ENCODE measurements at regions of chr5 and their contacts with region 1.

Region 1: DNA sequence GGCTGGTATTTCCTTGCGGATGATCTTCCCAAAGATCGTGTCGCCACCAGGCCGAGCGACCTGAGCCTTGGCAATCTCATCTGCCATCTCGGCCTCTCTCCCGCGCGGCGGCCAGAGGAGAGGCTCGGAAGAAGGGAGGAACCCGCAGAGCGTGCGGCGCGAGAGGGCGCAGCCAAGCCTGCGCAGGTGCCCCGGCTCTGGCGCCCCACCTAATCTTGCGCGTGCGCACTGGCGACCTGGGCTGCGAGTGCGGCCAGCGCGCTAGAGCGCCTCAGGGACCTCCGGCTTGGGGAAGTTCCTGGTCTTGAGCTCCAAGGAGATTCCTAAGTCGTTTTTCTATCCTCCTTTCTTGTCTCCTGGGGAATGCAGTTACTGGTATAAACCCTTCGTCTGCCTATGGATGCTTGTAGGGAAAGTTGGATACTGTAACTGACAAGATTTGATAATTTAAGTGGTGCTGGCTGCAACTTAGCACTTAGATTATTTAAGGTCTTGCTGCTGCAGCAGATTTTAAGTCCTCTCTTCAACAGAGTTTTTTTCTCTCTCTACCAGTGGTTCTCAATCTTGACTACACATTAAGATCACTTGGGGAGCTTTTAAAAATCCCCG is at the start of gene HINT1:
- DNase-seq: peak; percentile 81 to 96
- H3K4me3 ChIP-seq: peak within 1 kb of the TSS; percentile 93
- H3K27ac ChIP-seq: peak within 1 kb of the TSS; percentile 82
- H3K4me1 ChIP-seq: peaks cover 23% of the 10 kb centered on the region
- H3K27me3 ChIP-seq: no peaks in the 10 kb centered on the region
- CTCF ChIP-seq: no peak; the same call in 1 of the 2 replicates
- total RNA-seq, gene HINT1: 210 and 262 TPM in 2 replicates

Region 2: DNA sequence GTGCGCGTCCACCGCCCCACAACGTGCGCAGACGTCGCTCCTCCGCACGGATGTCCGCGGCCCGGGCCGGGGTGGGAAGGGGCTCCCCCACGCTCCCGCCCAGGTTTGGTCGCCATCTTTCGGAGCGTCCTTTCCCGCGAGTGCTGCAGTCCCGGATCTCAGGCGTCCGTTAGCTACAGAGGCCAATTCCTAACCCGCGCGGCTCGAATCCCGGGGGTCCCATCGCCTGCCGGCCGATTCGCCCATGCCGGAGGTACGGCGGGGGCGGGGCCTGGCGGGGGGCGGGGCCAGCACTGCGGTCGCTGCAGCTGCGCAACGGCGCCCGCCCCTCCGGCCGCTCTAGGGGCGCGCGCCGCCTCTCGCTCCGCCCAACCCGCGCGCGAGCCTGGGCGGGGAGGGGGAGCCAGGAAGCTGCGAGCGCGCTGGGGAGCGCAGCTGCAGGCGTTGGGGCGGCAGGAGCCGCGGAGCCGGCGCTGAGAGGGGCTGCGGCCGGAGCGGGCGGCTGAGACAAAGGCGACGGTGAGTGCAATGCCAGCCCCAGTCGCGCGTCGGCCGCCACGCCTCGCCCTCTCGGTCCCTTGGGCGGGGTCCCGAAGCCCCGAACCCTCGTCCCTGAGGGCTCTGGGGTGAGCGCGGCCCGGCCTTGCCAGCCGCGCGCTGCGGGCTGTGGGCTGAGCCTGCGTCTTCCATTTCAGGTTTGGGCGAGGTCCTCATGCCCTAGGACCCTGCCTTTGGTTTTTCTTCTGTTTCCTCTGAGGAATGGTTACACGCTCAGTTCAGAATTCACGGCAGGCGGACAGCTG is 98.6 kb after region 1 on chr5 and contains the start of gene CDC42SE2:
- CTCF ChIA-PET with region 1: no interaction called
- POLR2A ChIA-PET with region 1: no interaction called
- intact Hi-C with region 1: loop called (anchors 2 kb)
- DNase-seq: peak; percentile 59 to 86
- H3K4me3 ChIP-seq: peak within 1 kb of the TSS; percentile 86
- H3K27ac ChIP-seq: peak within 1 kb of the TSS; percentile 61
- H3K4me1 ChIP-seq: peaks cover 31% of the 10 kb centered on the region
- H3K27me3 ChIP-seq: no peaks in the 10 kb centered on the region
- CTCF ChIP-seq: no peak
- total RNA-seq, gene CDC42SE2: 27.3 and 32.8 TPM in 2 replicates

Region 3: GRCh38 chr5:131382407-131383395 is 217.5 kb after region 1 on chr5:
- CTCF ChIA-PET with region 1: interaction called, 6 read pairs
- POLR2A ChIA-PET with region 1: no interaction called
- intact Hi-C with region 1: loop called (anchors 2 kb)
- DNase-seq: peak; percentile 19 to 60
- H3K4me3 ChIP-seq: no peak overlapping the region
- H3K27ac ChIP-seq: no peak overlapping the region
- H3K4me1 ChIP-seq: peaks cover 8% of the 10 kb centered on the region; the same call in 1 of the 2 replicates
- H3K27me3 ChIP-seq: no peaks in the 10 kb centered on the region
- CTCF ChIP-seq: peak; percentile 69

Region 4: DNA sequence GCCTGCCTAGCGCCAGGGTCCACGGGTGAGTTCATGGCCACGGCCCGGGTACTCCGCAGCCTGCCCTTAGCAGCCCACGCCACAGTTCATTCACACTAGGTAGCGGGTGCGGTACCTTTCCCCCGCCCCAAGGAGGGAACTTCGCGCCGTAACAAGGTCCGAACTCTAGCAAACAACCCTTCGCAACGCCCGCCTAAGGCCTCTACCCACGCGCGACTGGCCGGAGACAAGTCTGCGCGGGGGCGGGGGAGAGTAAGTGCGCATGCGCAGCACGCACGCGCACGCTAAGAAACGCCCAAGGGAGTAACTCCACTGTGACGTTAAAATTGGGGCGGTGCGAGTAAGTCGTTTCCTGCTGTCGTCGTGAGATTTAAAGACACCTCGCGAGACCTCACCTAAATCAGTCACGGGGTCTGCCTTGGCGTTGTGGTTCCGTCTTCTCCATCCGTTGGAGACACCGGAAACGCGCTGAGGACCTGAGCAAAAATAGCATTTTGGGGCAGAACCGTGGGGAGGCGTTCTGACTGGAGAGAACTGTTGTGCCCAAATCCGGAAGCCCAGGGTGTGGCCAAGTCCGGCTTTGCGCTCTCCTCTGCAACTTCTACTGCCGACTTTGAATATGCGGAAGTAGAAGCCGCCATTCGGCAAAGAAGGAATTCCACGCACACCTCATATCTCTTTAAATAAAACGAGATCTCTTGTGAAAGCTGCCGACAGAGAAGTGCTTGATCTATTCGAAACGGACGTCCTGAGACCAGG is 470.0 kb after region 1 on chr5 and contains the start of gene RAPGEF6:
- CTCF ChIA-PET with region 1: no interaction called
- POLR2A ChIA-PET with region 1: no interaction called
- intact Hi-C with region 1: loop called (anchors 10 kb)
- DNase-seq: peak; percentile 93 to 99
- H3K4me3 ChIP-seq: peak within 1 kb of the TSS; percentile 66
- H3K27ac ChIP-seq: peak within 1 kb of the TSS; percentile 96
- H3K4me1 ChIP-seq: peaks cover 38% of the 10 kb centered on the region
- H3K27me3 ChIP-seq: no peaks in the 10 kb centered on the region
- CTCF ChIP-seq: no peak
- total RNA-seq, gene RAPGEF6: 17.1 and 21.9 TPM in 2 replicates

Region 5: GRCh38 chr5:132540764-132541163 is 1375.5 kb after region 1 on chr5:
- CTCF ChIA-PET with region 1: no interaction called
- POLR2A ChIA-PET with region 1: interaction called, 34 read pairs
- intact Hi-C with region 1: no loop called
- DNase-seq: no peak
- H3K4me3 ChIP-seq: no peak overlapping the region
- H3K27ac ChIP-seq: no peak overlapping the region
- H3K4me1 ChIP-seq: no peaks in the 10 kb centered on the region
- H3K27me3 ChIP-seq: no peaks in the 10 kb centered on the region
- CTCF ChIP-seq: no peak